ENCODE measurements at regions of chr15 and their contacts with region 1.

Region 1: DNA sequence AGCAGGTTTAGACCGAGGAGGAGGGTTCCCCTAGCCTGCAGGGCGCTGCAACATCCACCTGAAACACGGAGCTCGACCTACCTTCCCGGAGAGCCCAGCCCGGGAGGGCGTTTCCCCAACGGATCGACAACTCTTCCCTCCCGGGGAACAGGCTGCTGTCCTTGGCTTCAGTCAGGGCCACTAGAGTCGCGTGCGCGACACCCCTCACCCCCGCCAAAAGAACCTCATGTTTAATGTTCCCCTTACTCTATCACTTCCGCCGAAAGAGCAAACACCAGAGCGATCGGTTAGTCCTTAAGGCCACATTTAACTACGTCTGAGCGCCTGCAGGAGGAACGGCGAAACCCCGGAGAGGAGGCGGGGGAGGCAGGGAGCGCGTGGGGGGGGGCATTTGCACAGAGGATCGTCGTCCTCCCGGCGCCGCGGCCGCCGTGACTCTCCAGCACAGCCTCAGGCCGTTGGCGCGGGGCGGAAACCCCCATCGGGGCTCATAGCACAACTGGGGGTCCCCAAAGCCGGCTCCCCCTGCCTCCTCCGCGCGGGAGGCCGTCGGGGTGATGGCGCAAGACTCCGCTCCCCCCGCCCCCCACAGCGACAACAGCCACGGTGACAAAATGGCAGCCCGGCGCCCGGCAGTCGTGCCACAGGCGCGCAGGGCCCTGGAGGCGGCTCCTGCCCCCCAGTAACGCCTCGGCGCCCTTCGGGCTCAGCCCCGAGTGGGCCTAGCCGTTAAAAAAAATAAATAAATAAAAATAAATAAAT is 3.2 kb downstream of the ANP32A start:
- DNase-seq: peak; percentile 62 to 82
- H3K4me3 ChIP-seq: peak overlapping the region; percentile 78 to 93
- H3K27ac ChIP-seq: peak overlapping the region; percentile 97 to 99
- H3K4me1 ChIP-seq: peaks cover 0 to 52% (median 29%) of the 10 kb centered on the region in 4 donors
- H3K27me3 ChIP-seq: no peaks in the 10 kb centered on the region
- CTCF ChIP-seq: no peak

Region 2: GRCh38 chr15:68517285-68517761 is 300.2 kb before region 1 on chr15:
- intact Hi-C with region 1: no loop called
- DNase-seq: peak; percentile 49 to 82
- H3K4me3 ChIP-seq: no peak overlapping the region
- H3K27ac ChIP-seq: peak overlapping the region; percentile 77 to 78
- H3K4me1 ChIP-seq: peaks cover 0 to 38% (median 26%) of the 10 kb centered on the region in 4 donors
- H3K27me3 ChIP-seq: no peaks in the 10 kb centered on the region
- CTCF ChIP-seq: peak; percentile 54 to 70

Region 3: GRCh38 chr15:68775671-68776476 is 41.6 kb before region 1 on chr15:
- intact Hi-C with region 1: loop called (anchors 5 kb)
- DNase-seq: peak; percentile 94 to 95
- H3K4me3 ChIP-seq: no peak overlapping the region
- H3K27ac ChIP-seq: peak overlapping the region; percentile 71 to 79
- H3K4me1 ChIP-seq: peaks cover 0 to 29% (median 21%) of the 10 kb centered on the region in 4 donors
- H3K27me3 ChIP-seq: no peaks in the 10 kb centered on the region
- CTCF ChIP-seq: no peak